Head of caudate nucleus (tissue), 42 donors: ENCODE measurements at regions of chr5 and their contacts with region 1.

Region 1: GRCh38 chr5:35926389-35927051 is 11.9 kb downstream of the CAPSL start:
- DNase-seq: peak in 34 of 42 donors; percentile 15 to 89 (median 62)

Region 2: DNA sequence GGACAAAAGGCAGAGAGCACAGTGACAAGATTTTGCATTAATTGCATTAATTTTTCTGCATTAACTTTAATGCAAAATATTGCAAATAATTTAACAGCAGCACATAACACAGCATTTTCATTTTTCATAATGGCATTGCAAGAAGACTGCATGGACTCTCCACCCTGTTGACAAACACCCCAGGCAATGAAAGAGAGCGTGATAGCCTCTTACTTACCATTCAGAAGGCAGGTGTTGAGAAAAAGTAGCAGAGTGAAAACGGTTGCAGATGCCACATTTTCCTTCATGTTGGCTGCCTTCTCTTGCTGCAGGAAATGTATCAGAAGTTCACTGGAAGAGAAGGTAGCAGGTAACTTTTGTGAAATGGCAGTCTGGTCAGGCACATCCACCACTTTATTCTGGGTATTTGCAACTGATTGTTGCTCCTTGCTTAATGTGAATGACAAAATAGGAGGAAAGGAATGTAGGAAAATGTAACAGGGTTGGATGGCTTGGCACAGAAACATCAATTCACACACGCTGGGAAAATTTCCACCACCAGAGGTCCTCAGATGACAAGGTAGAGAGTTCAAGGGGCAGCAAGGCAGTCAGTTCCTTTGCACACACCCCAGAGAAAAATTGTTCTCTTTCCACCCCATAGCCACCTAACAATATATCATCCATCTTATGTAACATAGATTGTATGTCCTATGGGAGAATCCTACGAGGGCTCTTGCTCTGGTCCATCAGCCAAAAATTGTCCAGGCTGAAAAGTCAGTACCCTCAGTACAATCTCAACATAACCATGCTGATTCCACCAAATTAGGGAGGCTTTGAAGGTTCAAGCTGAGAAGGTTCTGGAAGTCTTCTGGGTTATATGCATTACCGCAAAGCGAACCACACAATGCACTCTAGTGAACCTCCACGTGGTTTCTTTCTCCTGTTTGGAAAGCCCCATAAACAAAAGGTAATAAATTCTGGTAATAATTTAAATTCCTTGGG is 836.9 kb before region 1 on chr5:
- intact Hi-C with region 1: loop called (anchors 10 kb)
- DNase-seq: peak in 41 of 42 donors; percentile 4 to 83 (median 64)

Region 3: GRCh38 chr5:35617435-35618303 is 308.9 kb before region 1 on chr5 and contains the start of gene SPEF2:
- intact Hi-C with region 1: loop called (anchors 5 kb)
- DNase-seq: peak; percentile 69 to 94 (median 85)

Region 4: DNA sequence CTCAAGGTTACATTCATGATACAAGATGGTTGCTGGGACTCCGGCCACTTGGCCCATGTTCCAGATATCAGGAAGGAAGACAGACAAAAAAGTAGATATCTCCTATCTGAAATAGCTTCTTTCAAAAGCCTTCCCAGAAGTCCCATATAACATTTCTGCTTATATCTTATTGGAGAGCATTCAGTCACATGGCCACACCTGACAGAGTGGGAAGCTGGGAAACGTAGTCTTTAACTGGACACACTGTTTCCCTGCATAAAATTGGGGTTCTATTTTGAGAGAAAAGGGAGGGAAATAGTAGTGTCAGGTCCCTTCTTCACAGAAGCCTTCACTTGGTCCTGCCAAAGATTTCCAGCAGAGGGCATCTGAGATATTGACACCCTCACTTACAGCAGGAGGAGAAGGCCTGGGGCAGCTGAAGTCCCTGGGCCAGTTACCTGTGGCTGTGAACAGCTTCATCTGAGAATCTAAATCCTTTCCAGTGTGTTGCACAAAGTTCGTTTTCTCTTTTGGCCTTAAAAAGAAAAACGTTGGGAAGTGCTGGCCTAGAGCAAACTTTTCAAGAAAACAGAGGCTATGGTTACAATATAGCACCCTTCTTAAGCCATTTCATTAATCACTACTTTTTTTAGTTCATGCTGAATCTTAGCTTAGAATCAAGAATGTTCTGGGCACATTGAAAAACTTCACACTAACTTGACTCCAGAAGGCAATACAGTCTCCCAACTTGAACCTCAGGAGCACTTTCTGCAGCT is 275.3 kb before region 1 on chr5:
- intact Hi-C with region 1: loop called (anchors 10 kb)
- DNase-seq: peak in 36 of 42 donors; percentile 6 to 76 (median 44)

Region 5: DNA sequence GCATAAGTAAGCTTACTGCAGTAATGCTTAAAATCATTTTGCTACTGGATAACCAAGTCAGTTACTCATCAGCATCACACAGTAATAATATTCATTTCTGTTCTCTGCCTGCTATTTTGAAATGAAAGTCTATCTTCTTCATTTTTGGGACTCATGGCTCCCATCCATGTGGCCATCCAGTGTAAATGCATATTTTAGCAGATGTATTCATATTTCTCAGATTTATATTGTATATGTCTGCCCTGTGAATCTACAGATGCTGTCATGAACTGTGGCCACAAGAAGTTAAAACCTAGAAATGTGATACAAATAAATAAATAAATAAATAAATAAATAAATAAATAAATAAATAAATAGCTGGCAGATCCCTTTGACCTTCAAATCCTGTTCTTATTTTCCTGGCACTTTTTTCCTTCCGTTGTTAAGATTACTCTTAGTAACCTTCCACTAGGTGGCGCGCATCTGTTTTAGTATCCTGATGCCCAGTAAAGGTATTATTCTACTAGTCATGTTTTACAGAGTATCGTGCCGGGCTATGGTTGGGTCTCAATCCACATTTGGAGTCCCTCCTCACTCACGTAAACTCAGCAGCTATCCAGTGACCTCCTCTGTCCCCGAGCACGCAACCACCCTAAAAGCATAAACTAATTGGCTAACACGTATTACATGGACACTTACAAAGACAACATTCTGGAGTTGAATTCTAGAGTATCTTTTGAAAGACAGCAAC is 149.0 kb before region 1 on chr5:
- intact Hi-C with region 1: loop called (anchors 5 kb)
- DNase-seq: peak in 41 of 42 donors; percentile 13 to 91 (median 71)